ENCODE measurements at regions of chr6 and their contacts with region 1.

Region 1: GRCh38 chr6:90194371-90194841 is 102.2 kb downstream of the BACH2 start:
- DNase-seq: peak in 2 of 14 experiments; percentile 13 to 42
- ATAC-seq: peak; percentile 51
- H3K4me3 ChIP-seq: no peak overlapping the region
- H3K4me3 Mint-ChIP-seq: peak overlapping the region; percentile 55
- H3K27ac ChIP-seq: peak overlapping the region in 1 of 2 donors; percentile 24
- H3K27ac Mint-ChIP-seq: peak overlapping the region; percentile 99
- H3K4me1 ChIP-seq: peaks cover 27% of the 10 kb centered on the region
- H3K4me1 Mint-ChIP-seq: peaks cover 90% of the 10 kb centered on the region
- H3K27me3 ChIP-seq: no peaks in the 10 kb centered on the region
- H3K27me3 Mint-ChIP-seq: no peaks in the 10 kb centered on the region
- CTCF ChIP-seq: no peak

Region 2: DNA sequence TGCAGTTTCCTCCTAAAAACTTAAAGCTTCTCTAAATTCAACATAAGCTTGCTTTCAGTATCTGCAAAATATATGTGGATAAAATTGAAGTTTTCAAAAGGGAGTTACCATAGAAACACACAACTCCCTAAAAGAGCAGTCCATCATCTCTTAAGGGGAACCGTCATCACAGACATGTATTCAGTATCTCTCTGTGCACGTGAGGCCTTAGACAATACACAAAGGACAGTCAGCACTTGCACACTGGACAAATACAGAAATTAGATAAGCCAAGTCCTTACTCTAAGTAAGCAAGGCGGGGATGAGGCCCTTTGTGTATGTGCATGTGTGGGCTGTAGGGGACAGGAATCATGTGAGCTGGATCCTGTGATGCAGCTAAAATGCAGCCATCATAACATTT is 34.4 kb before region 1 on chr6:
- CTCF ChIA-PET with region 1: no interaction called
- POLR2A ChIA-PET with region 1: interaction called, 4 read pairs
- intact Hi-C with region 1: loop called in 1 of 2 experiments (anchors 5 kb)
- DNase-seq: no peak
- ATAC-seq: peak; percentile 25
- H3K4me3 ChIP-seq: no peak overlapping the region
- H3K4me3 Mint-ChIP-seq: peak overlapping the region; percentile 27
- H3K27ac ChIP-seq: peak overlapping the region in 1 of 2 donors; percentile 9
- H3K27ac Mint-ChIP-seq: peak overlapping the region; percentile 84
- H3K4me1 ChIP-seq: peaks cover 34% of the 10 kb centered on the region
- H3K4me1 Mint-ChIP-seq: peaks cover 75% of the 10 kb centered on the region
- H3K27me3 ChIP-seq: no peaks in the 10 kb centered on the region
- H3K27me3 Mint-ChIP-seq: no peaks in the 10 kb centered on the region
- CTCF ChIP-seq: no peak

Region 3: DNA sequence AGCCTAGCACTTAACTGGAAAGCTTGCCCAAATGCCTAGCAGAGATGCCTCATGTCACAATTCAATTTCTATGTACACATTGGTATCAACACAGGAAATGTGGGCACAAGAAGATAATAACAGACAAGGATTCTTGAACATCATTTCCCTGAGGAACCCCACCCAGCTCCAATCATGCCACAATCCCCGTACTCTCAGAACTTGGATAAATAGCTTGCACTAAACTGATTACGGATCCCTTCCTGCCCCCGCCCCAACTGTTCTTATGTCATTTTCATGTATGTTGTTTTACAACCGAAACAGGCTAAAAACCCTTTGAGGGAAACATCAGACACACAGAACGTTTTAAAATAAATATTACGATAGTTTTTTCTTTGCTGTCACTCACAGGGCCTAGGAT is 15.1 kb after region 1 on chr6:
- CTCF ChIA-PET with region 1: no interaction called
- POLR2A ChIA-PET with region 1: interaction called, 7 read pairs
- intact Hi-C with region 1: loop called in 1 of 2 experiments (anchors 2 kb)
- DNase-seq: peak in 2 of 14 experiments; percentile 8 to 12
- ATAC-seq: peak; percentile 57
- H3K4me3 ChIP-seq: no peak overlapping the region
- H3K4me3 Mint-ChIP-seq: no peak overlapping the region
- H3K27ac ChIP-seq: no peak overlapping the region
- H3K27ac Mint-ChIP-seq: no peak overlapping the region
- H3K4me1 ChIP-seq: peaks cover 25% of the 10 kb centered on the region
- H3K4me1 Mint-ChIP-seq: peaks cover 92% of the 10 kb centered on the region
- H3K27me3 ChIP-seq: no peaks in the 10 kb centered on the region
- H3K27me3 Mint-ChIP-seq: no peaks in the 10 kb centered on the region
- CTCF ChIP-seq: no peak

Measured in CD4-positive, alpha-beta T cell (primary cell).